ENCODE measurements at regions of chr15 and their contacts with region 1.

Region 1: DNA sequence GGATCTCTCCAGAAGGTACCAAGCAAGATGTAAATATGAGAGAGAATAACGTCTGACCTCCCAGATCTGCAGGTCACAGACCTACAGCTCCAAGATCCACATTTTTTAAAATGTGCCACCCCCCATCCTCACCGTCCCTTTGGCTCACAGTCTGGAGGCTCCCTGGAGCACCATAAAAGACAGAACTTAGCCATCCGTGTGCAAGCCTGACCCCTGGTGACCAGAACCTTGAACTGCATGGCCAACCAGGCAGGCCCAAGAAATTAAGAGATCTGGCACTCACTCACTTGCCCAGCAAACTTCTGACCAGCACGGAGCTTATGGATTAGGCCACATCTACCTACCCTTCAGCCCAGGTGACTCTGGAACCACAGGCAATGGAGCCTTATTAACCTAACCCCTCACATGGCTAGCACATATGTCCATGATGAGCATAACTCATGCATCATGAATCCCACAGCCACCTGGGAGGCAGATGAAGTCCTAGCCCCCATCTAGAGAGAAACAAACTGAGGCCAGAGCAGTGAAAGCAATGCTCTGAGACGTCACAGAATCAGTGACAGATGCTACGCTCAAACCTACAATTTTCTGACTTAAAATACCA is 275.3 kb downstream of the UACA start:
- DNase-seq: peak; percentile 68
- ATAC-seq: no peak
- H3K4me3 Mint-ChIP-seq: no peak overlapping the region
- H3K27ac Mint-ChIP-seq: peak overlapping the region; percentile 35
- H3K4me1 Mint-ChIP-seq: peaks cover 60% of the 10 kb centered on the region
- H3K27me3 Mint-ChIP-seq: no peaks in the 10 kb centered on the region
- CTCF ChIP-seq: peak; percentile 95

Region 2: DNA sequence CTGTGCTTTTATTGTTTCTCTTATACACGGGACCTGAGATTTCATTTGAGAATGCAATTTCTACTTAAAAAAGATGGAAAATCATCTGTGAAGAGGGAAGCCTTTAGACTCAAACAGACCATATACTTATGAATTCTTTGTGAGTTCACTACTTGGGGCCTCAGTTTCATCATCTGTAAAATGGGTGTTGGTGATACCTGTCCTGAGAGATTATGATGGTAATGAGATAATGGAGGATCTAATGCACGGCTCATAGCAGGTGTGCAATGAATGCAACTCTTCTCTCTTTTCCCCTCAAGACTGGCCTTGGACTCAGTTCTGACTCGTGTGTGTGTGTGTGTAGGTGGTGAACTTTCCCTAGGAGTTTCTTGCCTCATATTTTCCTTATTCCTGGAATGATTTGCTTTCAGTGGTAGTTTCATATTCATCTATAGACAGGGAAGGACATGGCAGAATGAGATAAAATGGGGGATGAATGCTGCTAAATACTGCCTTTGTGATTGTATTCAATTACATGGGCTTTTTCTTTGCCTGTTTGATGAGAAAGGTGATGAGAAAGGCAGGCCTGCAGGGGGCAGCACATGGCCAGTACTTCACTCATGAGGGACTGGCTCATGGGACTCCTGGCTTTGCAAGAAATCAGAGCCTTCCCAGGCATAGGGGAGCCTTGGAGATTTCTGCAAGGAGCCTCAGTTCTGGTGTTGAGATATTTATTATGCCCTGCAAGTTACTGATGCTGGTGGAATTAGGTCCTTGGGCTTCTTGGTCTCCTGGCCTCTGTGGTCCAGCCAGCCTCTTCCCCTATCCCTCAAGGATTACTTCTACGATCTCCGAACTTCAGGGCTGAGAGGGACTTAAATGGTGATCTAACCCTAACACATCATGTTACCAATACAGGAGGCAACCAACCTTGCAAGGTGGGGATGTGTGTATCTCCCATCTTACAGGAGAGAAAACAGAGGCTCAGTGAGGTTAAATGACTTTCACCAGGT is 964.8 kb before region 1 on chr15:
- CTCF ChIA-PET with region 1: interaction called, 3 read pairs
- POLR2A ChIA-PET with region 1: no interaction called
- intact Hi-C with region 1: loop called (anchors 1 kb)
- DNase-seq: peak; percentile 32
- ATAC-seq: peak; percentile 42
- H3K4me3 Mint-ChIP-seq: no peak overlapping the region
- H3K27ac Mint-ChIP-seq: no peak overlapping the region
- H3K4me1 Mint-ChIP-seq: no peaks in the 10 kb centered on the region
- H3K27me3 Mint-ChIP-seq: peaks cover 12% of the 10 kb centered on the region
- CTCF ChIP-seq: no peak

Region 3: GRCh38 chr15:69755551-69756310 is 732.4 kb before region 1 on chr15:
- CTCF ChIA-PET with region 1: interaction called, 6 read pairs
- POLR2A ChIA-PET with region 1: interaction called, 6 read pairs
- intact Hi-C with region 1: loop called (anchors 1 kb)
- DNase-seq: peak; percentile 63
- ATAC-seq: peak; percentile 84
- H3K4me3 Mint-ChIP-seq: peak overlapping the region; percentile 71
- H3K27ac Mint-ChIP-seq: peak overlapping the region; percentile 89
- H3K4me1 Mint-ChIP-seq: peaks cover 72% of the 10 kb centered on the region
- H3K27me3 Mint-ChIP-seq: no peaks in the 10 kb centered on the region
- CTCF ChIP-seq: no peak

Region 4: DNA sequence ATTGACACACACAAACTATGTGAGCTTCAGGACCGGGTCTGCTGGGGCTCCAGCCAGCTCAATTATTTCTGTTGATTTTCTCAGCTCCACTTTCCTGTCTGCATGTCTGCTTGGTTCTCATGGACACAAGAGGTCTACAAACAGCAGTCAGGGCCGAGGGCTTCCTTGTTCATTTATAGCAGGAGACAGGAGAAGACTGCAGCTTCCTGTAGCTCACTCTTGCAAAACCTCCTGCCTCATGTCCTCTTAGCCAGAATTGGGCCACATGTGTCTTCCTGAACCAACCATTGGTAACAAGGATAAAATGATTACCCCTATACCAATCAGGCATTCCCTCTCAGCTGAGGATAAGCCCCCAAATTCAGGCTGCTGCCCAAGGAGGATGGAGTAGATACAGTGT is 573.1 kb before region 1 on chr15:
- CTCF ChIA-PET with region 1: no interaction called
- POLR2A ChIA-PET with region 1: no interaction called
- intact Hi-C with region 1: no loop called
- DNase-seq: no peak
- ATAC-seq: no peak
- H3K4me3 Mint-ChIP-seq: no peak overlapping the region
- H3K27ac Mint-ChIP-seq: no peak overlapping the region
- H3K4me1 Mint-ChIP-seq: peaks cover 15% of the 10 kb centered on the region
- H3K27me3 Mint-ChIP-seq: no peaks in the 10 kb centered on the region
- CTCF ChIP-seq: no peak

Region 5: DNA sequence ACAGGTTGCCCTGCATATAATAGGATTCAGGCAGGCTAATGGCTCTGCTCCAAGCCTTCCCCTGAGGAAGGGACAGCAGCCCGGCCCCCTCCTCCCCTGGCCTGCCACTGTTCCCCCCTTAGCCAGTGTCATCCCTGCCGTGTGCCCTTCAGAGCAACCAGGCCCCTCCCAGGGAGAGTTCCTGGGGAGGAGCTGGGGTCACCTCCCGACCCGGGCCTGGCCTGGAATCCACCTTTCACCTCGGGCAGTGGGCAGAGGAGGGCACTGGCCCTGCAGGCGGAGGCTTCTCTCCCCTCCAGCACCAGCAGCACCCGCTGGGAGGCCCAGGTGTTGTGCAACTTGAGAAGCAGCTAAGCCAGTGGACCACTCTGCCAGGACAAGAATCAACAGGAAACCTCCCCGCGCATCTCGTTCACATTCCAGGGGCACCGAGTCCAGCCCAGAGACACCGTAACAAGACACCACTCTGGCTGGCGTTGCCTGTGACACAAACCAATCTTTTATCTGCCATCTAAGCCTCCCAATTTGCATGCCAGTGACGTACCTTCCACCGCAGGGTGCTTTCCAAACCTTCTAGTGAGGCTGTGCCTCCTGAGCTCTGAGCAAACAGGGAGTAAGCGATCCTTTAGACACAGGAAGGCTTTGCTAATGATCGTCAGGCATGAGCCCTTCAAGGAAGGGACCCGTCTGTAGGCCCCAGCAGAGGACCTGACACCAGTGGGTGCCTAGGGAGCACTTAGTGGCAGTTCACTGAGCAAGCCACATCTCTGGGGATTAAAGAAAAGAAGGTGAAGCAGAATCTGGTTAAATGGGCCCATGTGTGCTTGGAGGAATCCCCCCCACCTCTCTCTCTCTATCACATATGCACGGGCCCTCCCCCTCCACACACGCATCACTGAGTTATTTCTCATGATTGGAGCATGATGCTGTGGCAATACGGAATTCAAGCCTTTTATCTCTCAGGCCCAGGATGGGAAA is 291.5 kb before region 1 on chr15:
- CTCF ChIA-PET with region 1: no interaction called
- POLR2A ChIA-PET with region 1: interaction called, 4 read pairs
- intact Hi-C with region 1: loop called (anchors 5 kb)
- DNase-seq: peak; percentile 62
- ATAC-seq: peak; percentile 82
- H3K4me3 Mint-ChIP-seq: peak overlapping the region; percentile 55
- H3K27ac Mint-ChIP-seq: peak overlapping the region; percentile 79
- H3K4me1 Mint-ChIP-seq: peaks cover 58% of the 10 kb centered on the region
- H3K27me3 Mint-ChIP-seq: peaks cover 7% of the 10 kb centered on the region
- CTCF ChIP-seq: no peak

Region 6: GRCh38 chr15:70318594-70319465 is 169.3 kb before region 1 on chr15:
- CTCF ChIA-PET with region 1: no interaction called
- POLR2A ChIA-PET with region 1: interaction called, 4 read pairs
- intact Hi-C with region 1: loop called (anchors 1 kb)
- DNase-seq: no peak
- ATAC-seq: peak; percentile 25
- H3K4me3 Mint-ChIP-seq: peak overlapping the region; percentile 72
- H3K27ac Mint-ChIP-seq: peak overlapping the region; percentile 85
- H3K4me1 Mint-ChIP-seq: peaks cover 57% of the 10 kb centered on the region
- H3K27me3 Mint-ChIP-seq: no peaks in the 10 kb centered on the region
- CTCF ChIP-seq: no peak

Region 7: GRCh38 chr15:70504299-70504951 is 16.3 kb after region 1 on chr15:
- CTCF ChIA-PET with region 1: interaction called, 25 read pairs
- POLR2A ChIA-PET with region 1: interaction called, 59 read pairs
- intact Hi-C with region 1: loop called (anchors 1 kb)
- DNase-seq: peak; percentile 53
- ATAC-seq: peak; percentile 60
- H3K4me3 Mint-ChIP-seq: peak overlapping the region; percentile 70
- H3K27ac Mint-ChIP-seq: peak overlapping the region; percentile 90
- H3K4me1 Mint-ChIP-seq: peaks cover 73% of the 10 kb centered on the region
- H3K27me3 Mint-ChIP-seq: no peaks in the 10 kb centered on the region
- CTCF ChIP-seq: no peak

Measured in activated B cell treated with CpG ODN at 0.5 μM for 24 hours (primary cell).